Dorsolateral prefrontal cortex (tissue), 120 donors: ENCODE measurements at regions of chr16 and their contacts with region 1.

Region 1: GRCh38 chr16:76653390-76654026 is 376.3 kb downstream of the CNTNAP4 start:
- DNase-seq: peak in 3 of 10 donors; percentile 43 to 59 (median 47)
- H3K4me3 ChIP-seq: no peak overlapping the region
- H3K27ac ChIP-seq: peak overlapping the region in 6 of 59 donors; percentile 15 to 42 (median 26)
- H3K27me3 ChIP-seq: no peaks in the 10 kb centered on the region
- CTCF ChIP-seq: peak in 55 of 56 donors; percentile 35 to 85 (median 73)

Region 2: DNA sequence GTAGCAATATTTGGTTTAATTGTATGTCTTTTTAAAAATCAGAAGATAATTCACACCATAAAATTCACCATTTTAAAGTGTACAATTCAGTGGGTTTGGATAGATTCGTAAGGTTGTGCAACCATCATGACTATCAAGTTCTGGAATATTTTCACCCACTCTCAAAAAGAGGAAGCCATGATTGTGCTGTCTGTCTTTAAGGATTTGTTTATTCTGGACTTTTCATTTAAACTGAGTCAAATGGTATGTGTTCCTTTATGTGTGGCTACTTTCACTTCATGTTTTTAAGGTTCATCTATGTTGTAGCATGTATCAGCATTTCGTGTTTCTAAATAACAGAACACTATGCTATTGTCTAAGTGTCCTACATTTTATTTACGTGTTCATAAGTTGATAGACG is 859.1 kb before region 1 on chr16:
- intact Hi-C with region 1: loop called in 1 of 2 experiments (anchors 10 kb)
- DNase-seq: no peak
- H3K4me3 ChIP-seq: no peak overlapping the region
- H3K27ac ChIP-seq: no peak overlapping the region
- H3K27me3 ChIP-seq: no peaks in the 10 kb centered on the region
- CTCF ChIP-seq: no peak